MCF 10A (cell line): ENCODE measurements at regions of chr1 and their contacts with region 1.

Region 1: GRCh38 chr1:151254217-151255213 is at the start of gene PSMD4:
- DNase-seq: peak; percentile 99
- H3K4me3 Mint-ChIP-seq: peak within 1 kb of the TSS; percentile 79
- H3K27ac Mint-ChIP-seq: peak within 1 kb of the TSS; percentile 98
- H3K4me1 Mint-ChIP-seq: peaks cover 24% of the 10 kb centered on the region
- H3K27me3 Mint-ChIP-seq: no peaks in the 10 kb centered on the region
- CTCF ChIP-seq: no peak
- total RNA-seq, gene PSMD4: 266 and 285 TPM in 2 replicates

Region 2: GRCh38 chr1:150995896-150996295 is 258.6 kb before region 1 on chr1:
- CTCF ChIA-PET with region 1: no interaction called
- POLR2A ChIA-PET with region 1: no interaction called
- intact Hi-C with region 1: no loop called
- DNase-seq: peak; percentile 56
- H3K4me3 Mint-ChIP-seq: no peak overlapping the region
- H3K27ac Mint-ChIP-seq: no peak overlapping the region
- H3K4me1 Mint-ChIP-seq: peaks cover 5% of the 10 kb centered on the region
- H3K27me3 Mint-ChIP-seq: no peaks in the 10 kb centered on the region
- CTCF ChIP-seq: peak; percentile 96

Region 3: DNA sequence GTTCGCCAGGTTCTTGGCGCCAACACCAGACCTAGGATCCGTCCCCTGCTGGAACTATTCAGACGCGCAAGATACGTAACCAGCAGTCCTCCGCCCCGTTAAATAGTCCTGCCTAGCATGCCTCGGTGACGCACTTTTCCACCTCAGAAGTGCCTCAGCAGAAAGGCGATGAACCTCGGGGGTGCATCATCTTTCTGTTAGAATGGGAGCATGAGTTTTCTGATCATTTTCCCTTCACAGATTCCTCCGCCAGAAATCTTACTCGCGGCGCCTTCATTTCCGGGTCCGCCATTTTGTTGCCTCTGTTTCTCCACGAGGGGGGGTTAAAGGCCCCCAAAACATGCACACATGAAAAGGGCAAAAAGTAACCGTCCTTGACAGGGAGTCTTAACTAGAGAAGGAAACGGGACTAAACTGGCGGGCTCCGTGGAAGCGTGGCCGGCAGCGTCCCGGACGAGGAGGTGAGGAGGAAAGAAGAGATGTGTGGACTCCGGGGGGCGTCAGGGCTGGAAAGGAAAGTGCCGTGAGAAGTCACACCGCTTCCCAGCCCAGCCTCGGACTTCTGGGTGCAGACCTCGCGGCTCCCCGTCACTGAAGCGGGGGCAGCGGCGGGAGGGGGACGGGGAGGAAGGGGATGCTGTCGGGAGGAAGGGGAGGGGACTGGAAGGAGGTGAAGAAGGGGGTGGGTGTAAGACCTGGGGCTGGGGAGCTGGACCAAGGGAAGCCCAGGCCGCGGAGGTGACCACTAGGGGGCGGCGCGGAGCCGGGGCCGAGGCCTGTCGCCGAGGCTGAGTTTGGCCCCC is 183.8 kb before region 1 on chr1 and contains the start of gene GABPB2:
- CTCF ChIA-PET with region 1: interaction called, 3 read pairs
- POLR2A ChIA-PET with region 1: interaction called, 4 read pairs
- intact Hi-C with region 1: loop called (anchors 10 kb)
- DNase-seq: peak; percentile 98
- H3K4me3 Mint-ChIP-seq: peak within 1 kb of the TSS; percentile 100
- H3K27ac Mint-ChIP-seq: peak within 1 kb of the TSS; percentile 100
- H3K4me1 Mint-ChIP-seq: no peaks in the 10 kb centered on the region
- H3K27me3 Mint-ChIP-seq: no peaks in the 10 kb centered on the region
- CTCF ChIP-seq: peak; percentile 99
- total RNA-seq, gene GABPB2: 20.2 and 22.9 TPM in 2 replicates

Region 4: DNA sequence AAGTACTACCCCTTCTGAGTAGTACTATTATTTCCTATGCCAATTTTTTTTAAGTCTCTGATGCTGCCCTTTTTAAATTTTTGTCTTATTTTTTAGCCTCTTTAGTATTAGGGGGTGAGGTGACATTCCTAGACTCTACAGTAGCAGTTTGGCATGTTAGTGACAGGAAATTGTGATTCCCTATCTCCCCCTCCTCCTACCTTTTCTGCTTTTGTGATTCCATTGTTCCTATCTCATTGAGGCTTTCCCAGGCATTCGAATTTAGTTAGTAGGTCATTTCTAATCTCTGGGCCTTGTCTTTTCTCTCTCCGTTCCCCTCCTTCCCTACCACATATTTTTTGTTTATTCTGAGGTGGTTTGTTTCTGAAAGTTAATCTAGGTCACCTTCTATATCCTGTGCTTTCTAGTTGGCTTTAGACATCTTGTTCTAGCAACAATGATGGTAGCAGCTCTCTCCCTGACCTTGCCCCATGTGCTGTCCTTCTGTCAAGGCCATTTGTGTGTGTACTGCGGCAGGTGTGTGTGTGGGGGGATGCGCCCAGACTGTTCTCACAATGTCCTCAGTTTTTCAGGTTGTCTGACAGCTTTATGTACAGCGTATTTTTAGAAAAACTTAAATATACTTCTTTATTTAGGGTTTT is 129.6 kb before region 1 on chr1:
- CTCF ChIA-PET with region 1: no interaction called
- POLR2A ChIA-PET with region 1: no interaction called
- intact Hi-C with region 1: no loop called
- DNase-seq: no peak
- H3K4me3 Mint-ChIP-seq: no peak overlapping the region
- H3K27ac Mint-ChIP-seq: no peak overlapping the region
- H3K4me1 Mint-ChIP-seq: no peaks in the 10 kb centered on the region
- H3K27me3 Mint-ChIP-seq: no peaks in the 10 kb centered on the region
- CTCF ChIP-seq: no peak

Region 5: DNA sequence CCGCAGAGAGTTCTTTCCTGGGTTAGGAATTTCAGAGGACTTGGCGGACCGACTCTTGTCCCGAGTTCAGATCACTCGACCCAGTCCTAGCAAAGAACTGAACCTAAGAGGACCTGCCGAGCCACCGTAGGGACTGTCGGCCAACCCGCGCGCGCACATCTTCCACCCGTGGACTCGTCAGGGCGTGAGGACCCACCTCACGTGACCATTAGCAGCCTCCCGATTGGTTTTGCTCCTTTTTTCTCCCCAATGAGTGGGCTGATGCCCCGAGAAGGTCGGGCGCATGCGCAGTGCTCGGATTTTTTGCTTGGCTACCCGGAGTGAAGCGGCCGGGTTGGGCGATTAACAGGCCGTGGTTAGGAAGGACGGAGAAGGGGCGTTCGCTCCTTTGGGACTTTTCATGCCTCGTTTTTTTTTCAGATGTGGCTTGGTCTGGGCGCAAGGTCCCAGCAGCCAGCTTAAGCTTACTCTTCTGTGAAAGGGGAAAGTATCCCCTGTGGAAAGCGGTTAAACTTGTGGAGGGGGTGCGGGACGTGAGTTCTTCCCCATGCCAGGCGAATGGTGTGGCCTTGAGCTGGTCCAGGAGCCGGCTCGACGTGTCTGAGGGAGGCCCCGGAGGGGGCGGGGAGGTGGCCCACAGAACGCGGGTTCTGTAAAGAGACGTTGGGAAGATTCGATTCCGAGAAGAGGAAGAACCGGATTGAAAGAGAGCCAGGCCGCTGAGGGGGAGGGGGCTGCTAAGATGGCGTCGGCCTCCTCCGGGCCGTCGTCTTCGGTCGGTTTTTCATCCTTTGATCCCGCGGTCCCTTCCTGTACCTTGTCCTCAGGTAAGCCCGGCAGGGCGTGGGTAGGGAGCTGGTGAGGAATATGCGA is 56.0 kb before region 1 on chr1 and contains the start of gene PIP5K1A:
- CTCF ChIA-PET with region 1: interaction called, 70 read pairs
- POLR2A ChIA-PET with region 1: interaction called, 153 read pairs
- intact Hi-C with region 1: loop called (anchors 1 kb)
- DNase-seq: peak; percentile 100
- H3K4me3 Mint-ChIP-seq: peak within 1 kb of the TSS; percentile 93
- H3K27ac Mint-ChIP-seq: peak within 1 kb of the TSS; percentile 95
- H3K4me1 Mint-ChIP-seq: peaks cover 40% of the 10 kb centered on the region
- H3K27me3 Mint-ChIP-seq: no peaks in the 10 kb centered on the region
- CTCF ChIP-seq: no peak
- total RNA-seq, gene PIP5K1A: 150 and 163 TPM in 2 replicates

Region 6: DNA sequence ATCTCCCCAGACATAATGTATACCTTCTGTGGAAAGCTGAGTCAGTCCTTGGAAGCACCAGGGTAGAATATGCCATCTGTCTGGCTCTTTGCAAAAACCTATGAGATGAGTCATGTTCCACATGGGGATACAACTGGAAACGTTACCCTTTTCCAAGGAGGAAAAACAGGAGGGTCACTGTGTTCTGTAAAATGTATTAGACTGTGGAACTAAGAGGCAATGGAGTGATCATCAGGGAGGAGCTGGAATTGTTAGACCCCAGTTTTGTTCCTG is 16.1 kb before region 1 on chr1:
- CTCF ChIA-PET with region 1: interaction called, 122 read pairs
- POLR2A ChIA-PET with region 1: interaction called, 11 read pairs
- intact Hi-C with region 1: no loop called
- DNase-seq: peak; percentile 68
- H3K4me3 Mint-ChIP-seq: no peak overlapping the region
- H3K27ac Mint-ChIP-seq: peak overlapping the region; percentile 29
- H3K4me1 Mint-ChIP-seq: peaks cover 12% of the 10 kb centered on the region
- H3K27me3 Mint-ChIP-seq: no peaks in the 10 kb centered on the region
- CTCF ChIP-seq: no peak

Region 7: GRCh38 chr1:151267760-151268159 is 13.2 kb after region 1 on chr1:
- CTCF ChIA-PET with region 1: interaction called, 5 read pairs
- POLR2A ChIA-PET with region 1: interaction called, 15 read pairs
- intact Hi-C with region 1: no loop called
- DNase-seq: no peak
- H3K4me3 Mint-ChIP-seq: no peak overlapping the region
- H3K27ac Mint-ChIP-seq: no peak overlapping the region
- H3K4me1 Mint-ChIP-seq: no peaks in the 10 kb centered on the region
- H3K27me3 Mint-ChIP-seq: no peaks in the 10 kb centered on the region
- CTCF ChIP-seq: no peak

Region 8: DNA sequence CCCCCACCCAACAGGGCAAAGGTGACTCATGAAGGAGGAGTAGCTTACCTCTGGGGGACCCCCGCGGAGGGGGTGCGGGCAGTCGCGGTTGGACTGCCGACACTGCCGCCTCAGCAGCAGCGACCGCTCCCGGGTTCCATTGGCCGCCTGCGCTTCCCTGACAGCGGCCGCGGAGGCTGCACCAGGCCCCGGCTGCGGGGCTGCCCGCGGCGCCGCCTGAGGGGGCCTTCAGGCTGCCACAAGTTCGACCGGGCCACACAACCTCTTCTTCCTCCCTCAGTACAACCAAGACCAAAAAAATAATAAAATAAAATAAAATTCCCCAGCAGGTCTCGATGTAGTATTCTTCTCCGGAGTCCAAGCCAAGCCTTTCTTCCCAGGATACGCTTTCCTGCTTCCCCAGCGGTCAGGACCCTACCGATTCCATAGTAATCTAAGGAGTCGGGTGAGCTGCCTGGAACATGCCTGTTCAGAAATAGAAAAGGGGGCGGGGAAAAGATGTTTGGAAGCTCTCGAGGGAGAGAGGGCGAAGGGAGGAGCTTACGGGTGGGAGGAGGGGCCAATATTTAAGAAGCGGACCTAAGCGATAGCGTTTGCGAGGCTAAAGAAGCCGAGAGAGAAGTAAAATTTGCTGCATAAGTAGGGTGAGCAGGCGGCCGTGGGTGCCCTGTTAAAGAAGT is 72.8 kb after region 1 on chr1 and contains the start of gene PI4KB:
- CTCF ChIA-PET with region 1: interaction called, 4 read pairs
- POLR2A ChIA-PET with region 1: interaction called, 19 read pairs
- intact Hi-C with region 1: no loop called
- DNase-seq: peak; percentile 100
- H3K4me3 Mint-ChIP-seq: peak within 1 kb of the TSS; percentile 89
- H3K27ac Mint-ChIP-seq: peak within 1 kb of the TSS; percentile 90
- H3K4me1 Mint-ChIP-seq: peaks cover 36% of the 10 kb centered on the region
- H3K27me3 Mint-ChIP-seq: no peaks in the 10 kb centered on the region
- CTCF ChIP-seq: no peak
- total RNA-seq, gene PI4KB: 75.3 and 90.1 TPM in 2 replicates

Region 9: DNA sequence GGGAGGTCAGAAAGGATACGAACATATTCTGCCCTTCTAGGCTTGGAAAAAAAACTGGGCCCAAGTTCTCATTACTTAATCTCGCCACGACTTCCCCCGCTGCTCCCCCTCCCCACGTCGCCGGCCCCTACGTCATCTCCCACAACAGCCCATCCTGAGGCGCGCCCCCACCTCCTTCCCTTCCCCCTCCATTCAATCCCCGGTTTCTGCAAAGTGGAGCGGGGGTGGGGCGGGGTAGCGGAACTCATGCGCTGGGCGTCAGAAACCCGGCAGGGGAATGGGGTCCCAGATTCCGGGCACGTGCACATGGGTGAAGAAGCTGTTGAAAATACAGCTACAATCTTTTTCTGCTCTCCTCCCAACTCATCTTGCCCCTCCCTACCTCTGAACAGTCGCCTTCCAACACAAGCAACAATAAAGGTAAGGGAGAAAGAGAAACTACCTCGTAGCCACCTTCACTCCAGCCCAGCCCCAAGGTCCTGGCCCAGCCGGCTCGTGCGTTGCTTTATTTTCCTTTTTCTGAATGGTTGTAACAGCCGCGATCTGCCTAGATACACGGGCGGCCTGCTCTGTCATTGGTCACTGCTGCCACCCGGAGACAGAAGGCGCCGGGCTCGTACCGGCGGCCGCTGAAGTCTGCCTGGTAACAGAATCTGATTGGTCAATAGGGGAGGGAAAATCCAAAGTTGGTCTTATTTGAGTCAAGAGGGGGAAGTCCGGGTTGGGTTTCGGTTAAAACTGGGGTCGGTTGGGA is 92.4 kb after region 1 on chr1 and contains the start of gene RFX5:
- CTCF ChIA-PET with region 1: interaction called, 22 read pairs
- POLR2A ChIA-PET with region 1: interaction called, 3 read pairs
- intact Hi-C with region 1: loop called (anchors 2 kb)
- DNase-seq: peak; percentile 99
- H3K4me3 Mint-ChIP-seq: peak within 1 kb of the TSS; percentile 94
- H3K27ac Mint-ChIP-seq: peak within 1 kb of the TSS; percentile 97
- H3K4me1 Mint-ChIP-seq: peaks cover 28% of the 10 kb centered on the region
- H3K27me3 Mint-ChIP-seq: no peaks in the 10 kb centered on the region
- CTCF ChIP-seq: no peak
- total RNA-seq, gene RFX5: 19.2 and 26.5 TPM in 2 replicates